A673 (cell line): ENCODE measurements at regions of chr12 and their contacts with region 1.

Region 1: DNA sequence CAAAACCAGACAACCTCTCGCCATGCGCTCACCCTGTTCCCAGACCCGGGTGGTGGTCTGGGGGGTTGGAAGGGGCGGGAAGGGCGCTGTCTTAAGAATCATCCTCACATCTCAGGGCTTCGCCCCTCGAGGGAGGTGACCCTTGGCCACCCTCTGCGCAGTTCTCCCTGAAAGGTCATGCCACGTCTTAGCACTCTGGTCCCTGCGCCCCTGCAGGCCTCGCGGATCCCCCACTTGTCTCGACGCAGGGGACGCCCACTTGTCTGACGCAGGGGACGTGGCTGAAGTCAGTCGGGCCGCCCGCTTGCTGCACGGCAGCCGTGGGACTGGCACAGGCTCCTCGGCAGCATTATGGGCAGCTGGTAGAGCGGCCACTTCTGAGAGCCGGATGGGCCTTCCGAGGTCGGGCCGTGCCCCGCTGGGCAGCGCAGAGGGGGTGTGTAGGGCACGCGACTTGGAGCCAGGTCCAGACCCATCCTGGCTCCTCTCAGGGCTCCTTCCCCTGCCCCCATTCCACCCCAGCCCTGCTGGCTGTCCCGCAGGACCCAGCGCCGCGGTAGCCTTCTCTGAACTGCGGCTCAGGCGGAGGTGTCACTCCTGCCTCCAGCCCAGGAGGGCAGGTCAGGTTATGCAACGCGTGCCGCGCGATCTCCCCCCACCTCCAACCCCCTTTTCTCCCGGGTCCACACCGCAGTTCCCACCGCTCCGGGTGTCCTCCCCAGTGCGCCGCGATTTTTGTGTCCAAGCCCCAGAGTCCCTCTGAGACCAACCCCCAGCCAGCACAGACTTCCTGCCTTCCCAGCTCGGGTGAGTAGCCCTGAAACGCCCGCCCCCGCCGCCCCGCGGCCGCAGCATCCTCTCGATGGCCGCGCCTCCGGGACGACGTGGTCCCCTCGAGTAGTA is 40.9 kb upstream of the CAPRIN2 start:
- DNase-seq: peak; percentile 89
- H3K4me3 ChIP-seq: peak overlapping the region; percentile 61
- H3K27ac ChIP-seq: peak overlapping the region; percentile 60
- H3K4me1 ChIP-seq: peaks cover 36% of the 10 kb centered on the region
- H3K27me3 ChIP-seq: no peaks in the 10 kb centered on the region
- CTCF ChIP-seq: 0 out of 2 replicates have a peak, but pooled peaks have one; percentile 8

Region 2: DNA sequence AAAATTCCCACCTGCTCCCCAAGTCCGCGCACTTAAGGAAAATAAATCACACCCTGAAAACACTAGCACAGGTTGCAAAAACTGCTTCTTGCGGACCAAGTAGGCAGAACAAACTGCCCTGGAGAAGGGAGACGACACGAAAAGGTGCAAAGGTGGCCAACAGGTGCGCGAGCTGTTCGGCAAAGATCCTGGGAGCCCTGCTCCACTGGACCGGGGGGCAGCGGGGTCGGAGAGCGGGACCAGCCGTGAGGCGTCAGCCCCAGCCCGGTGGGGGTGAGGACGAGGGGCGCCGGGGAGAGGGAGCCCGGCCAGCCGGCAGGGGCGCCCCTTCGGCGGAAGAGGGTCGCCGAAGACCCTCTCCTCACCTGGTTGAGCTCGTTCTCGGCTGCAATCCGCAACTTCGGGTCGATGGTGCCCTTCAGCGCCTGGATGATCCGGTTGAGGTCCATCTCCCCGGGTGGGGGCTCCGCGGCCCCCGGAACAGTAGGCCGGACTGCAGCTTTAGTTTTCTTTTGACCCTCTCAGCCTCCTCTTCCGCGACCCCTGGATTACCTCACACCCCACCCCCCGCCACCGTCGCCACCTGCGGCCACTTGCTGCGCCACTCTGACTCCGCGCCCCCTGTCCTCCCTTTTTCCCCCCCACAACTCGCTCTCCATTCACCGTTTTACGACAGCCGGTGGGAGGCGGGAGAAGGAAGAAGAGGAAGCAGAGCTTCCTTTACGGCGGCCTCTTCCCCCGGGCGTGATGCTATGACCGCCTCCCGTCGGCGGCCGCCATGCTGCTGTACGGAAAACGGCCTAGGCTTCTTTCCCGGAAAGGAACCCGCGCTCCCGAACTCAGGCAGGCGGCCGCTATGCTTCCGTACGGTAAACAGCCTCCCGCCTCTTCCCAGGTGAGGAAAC is 100.2 kb before region 1 on chr12 and contains the start of gene IPO8:
- CTCF ChIA-PET with region 1: no interaction called
- POLR2A ChIA-PET with region 1: no interaction called
- intact Hi-C with region 1: loop called (anchors 5 kb)
- DNase-seq: peak; percentile 97
- H3K4me3 ChIP-seq: peak within 1 kb of the TSS; percentile 83
- H3K27ac ChIP-seq: peak within 1 kb of the TSS; percentile 81
- H3K4me1 ChIP-seq: peaks cover 11% of the 10 kb centered on the region
- H3K27me3 ChIP-seq: no peaks in the 10 kb centered on the region
- CTCF ChIP-seq: peak; percentile 57
- total RNA-seq, gene IPO8: 37.9 and 42.7 TPM in 2 replicates

Region 3: DNA sequence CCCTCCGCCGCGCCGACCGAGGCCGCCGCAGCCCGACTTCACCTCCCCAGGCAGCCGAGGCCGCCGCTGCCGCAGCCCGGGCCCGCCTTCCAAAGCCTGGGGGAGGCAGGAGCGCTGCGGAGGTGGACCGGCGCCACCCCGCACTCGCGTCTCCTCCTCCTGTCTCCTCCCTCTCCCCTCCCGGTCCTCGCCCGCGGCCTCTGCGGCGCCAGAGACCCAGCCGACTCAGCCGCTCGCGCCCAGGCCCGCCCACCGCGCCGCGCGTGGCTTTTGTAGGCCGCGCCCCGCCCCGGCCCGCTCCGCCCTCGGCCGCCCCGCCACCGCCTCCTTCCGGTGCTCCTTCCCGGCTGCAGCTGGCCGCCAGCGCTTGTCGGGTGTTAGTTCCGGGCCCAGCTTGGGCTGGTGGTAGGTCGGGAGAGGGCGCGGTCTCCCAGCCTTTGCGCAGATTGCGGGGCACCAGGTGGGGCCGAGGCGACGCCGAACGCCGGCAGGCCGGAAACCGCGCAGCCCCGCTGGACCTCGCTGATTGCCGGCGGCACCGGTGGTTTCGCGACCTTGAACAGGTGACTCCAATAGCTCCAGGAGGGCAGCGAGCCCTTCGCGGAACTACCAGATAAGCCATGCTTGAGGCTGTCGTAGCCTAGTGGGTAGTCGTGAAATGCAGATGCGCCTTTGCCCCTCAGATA is 40.8 kb before region 1 on chr12 and contains the start of gene CAPRIN2:
- CTCF ChIA-PET with region 1: no interaction called
- POLR2A ChIA-PET with region 1: interaction called, 3 read pairs
- intact Hi-C with region 1: loop called (anchors 2 kb)
- DNase-seq: peak; percentile 97
- H3K4me3 ChIP-seq: peak within 1 kb of the TSS; percentile 83
- H3K27ac ChIP-seq: peak within 1 kb of the TSS; percentile 61
- H3K4me1 ChIP-seq: peaks cover 15% of the 10 kb centered on the region
- H3K27me3 ChIP-seq: no peaks in the 10 kb centered on the region
- CTCF ChIP-seq: peak; percentile 45
- total RNA-seq, gene CAPRIN2: 16.4 and 16.7 TPM in 2 replicates